ENCODE measurements at regions of chr11 and their contacts with region 1.

Region 1: DNA sequence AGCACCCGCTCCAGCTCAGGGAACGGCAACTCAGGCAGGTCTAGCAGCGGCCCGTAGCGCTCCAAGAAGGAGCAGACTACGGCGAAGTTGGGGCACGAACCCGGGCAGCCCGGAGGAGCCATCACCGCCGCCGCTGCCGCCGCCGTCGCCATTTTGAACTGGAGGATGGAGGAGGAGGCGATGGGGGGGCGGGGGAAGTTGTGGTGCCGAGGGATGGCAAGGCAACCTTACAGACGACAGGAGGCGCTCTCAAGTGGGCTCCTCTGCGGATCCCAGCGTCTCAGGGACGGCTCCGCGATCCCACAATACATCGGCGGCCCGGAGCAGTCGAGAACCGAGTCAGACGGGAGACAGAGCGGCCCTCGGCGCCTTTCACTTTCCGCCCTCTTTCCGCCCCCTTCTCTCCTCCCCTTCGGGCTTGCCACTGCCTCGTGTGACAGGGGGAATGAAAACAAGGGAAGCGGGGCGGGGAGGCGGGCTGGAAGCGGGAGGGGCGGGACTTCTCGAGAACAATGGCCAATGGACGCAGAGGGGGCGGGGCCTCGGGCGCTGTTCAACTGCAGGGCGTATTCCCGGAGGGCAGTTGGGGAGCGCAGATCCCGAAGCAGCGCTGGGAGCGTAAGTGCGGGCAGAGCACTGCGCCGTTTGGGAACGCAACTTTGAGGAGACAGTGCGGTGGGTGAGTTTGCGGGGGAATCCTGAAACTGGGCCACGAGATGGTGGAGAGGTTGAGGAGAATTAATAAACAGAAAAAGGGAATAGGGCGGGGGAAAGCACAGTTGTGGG is at the starts of genes AAMDC and RSF1:
- DNase-seq: peak; percentile 99 to 100 (median 99)
- ATAC-seq: peak; percentile 92
- H3K4me3 ChIP-seq: peak within 1 kb of the TSS; percentile 100
- H3K4me1 ChIP-seq: peaks cover 8% of the 10 kb centered on the region
- CTCF ChIP-seq: peak; percentile 66
- total RNA-seq, gene AAMDC: 22.9 to 28.1 (median 27.9) TPM
- total RNA-seq, gene RSF1: 43.7 to 80.2 (median 44.4) TPM

Region 2: DNA sequence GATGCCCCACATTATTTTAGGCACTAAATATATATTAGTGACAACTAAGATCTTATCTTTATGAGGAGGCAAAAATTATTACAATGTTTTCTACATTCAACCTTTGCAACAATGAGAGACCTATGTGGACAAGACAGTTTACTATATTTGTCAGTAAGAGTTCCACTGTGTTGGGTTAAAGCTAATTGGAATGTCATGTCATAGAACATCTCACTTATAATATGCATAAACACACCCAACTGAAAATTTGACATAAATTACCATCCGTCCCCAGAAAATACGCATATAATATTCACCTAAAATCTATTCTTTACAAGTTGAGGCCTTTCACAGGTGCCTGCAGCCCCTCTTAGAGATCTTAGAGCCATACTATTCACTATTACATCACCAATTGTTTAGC is 84.3 kb before region 1 on chr11:
- intact Hi-C with region 1: no loop called
- DNase-seq: no peak
- ATAC-seq: no peak
- H3K4me3 ChIP-seq: no peak overlapping the region
- H3K4me1 ChIP-seq: no peaks in the 10 kb centered on the region
- CTCF ChIP-seq: no peak

Region 3: GRCh38 chr11:78000193-78000592 is 179.4 kb after region 1 on chr11:
- intact Hi-C with region 1: loop called in 1 of 2 experiments (anchors 5 kb)
- DNase-seq: peak in 1 of 3 donors; percentile 50
- ATAC-seq: peak; percentile 86
- H3K4me3 ChIP-seq: no peak overlapping the region
- H3K4me1 ChIP-seq: peaks cover 3% of the 10 kb centered on the region
- CTCF ChIP-seq: peak; percentile 41

Region 4: GRCh38 chr11:78177216-78177615 is 356.5 kb after region 1 on chr11:
- intact Hi-C with region 1: no loop called
- DNase-seq: no peak
- ATAC-seq: no peak
- H3K4me3 ChIP-seq: no peak overlapping the region
- H3K4me1 ChIP-seq: no peaks in the 10 kb centered on the region
- CTCF ChIP-seq: no peak